Mammary epithelial cell (primary cell): ENCODE measurements at regions of chr1 and their contacts with region 1.

Region 1: GRCh38 chr1:158686111-158687009 is at the start of gene SPTA1:
- DNase-seq: no peak
- H3K4me3 ChIP-seq: no peak within 1 kb of the TSS
- H3K27ac ChIP-seq: no peak within 1 kb of the TSS
- H3K4me1 ChIP-seq: no peaks in the 10 kb centered on the region
- H3K27me3 ChIP-seq: no peaks in the 10 kb centered on the region
- CTCF ChIP-seq: no peak
- total RNA-seq, gene SPTA1: not detected

Region 2: DNA sequence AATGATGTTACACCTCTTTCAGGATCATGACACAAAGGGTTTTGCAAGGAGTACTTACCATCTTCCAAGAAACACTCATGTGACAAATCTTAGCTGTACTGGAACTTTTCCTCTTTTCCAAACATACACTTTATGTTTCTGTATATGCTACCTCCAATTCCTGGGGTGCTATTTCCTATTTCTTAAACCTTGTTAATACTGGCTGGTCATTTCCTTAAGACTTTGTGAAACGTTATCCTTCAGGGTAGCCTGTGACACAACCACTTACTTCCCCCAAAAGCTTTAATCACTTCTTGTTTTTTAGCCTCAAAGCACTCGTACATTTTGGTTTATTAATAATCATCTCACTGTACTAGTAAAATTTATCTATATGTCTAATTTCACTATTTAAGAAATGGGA is 41.9 kb before region 1 on chr1:
- CTCF ChIA-PET with region 1: no interaction called
- dilution Hi-C with region 1: loop called (anchors 5 kb)
- in situ Hi-C with region 1: no loop called
- intact Hi-C with region 1: no loop called
- DNase-seq: no peak
- H3K4me3 ChIP-seq: no peak overlapping the region
- H3K27ac ChIP-seq: no peak overlapping the region
- H3K4me1 ChIP-seq: no peaks in the 10 kb centered on the region
- H3K27me3 ChIP-seq: no peaks in the 10 kb centered on the region
- CTCF ChIP-seq: no peak